Esophagus muscularis mucosa (tissue), 4 donors: ENCODE measurements at regions of chr13 and their contacts with region 1.

Region 1: DNA sequence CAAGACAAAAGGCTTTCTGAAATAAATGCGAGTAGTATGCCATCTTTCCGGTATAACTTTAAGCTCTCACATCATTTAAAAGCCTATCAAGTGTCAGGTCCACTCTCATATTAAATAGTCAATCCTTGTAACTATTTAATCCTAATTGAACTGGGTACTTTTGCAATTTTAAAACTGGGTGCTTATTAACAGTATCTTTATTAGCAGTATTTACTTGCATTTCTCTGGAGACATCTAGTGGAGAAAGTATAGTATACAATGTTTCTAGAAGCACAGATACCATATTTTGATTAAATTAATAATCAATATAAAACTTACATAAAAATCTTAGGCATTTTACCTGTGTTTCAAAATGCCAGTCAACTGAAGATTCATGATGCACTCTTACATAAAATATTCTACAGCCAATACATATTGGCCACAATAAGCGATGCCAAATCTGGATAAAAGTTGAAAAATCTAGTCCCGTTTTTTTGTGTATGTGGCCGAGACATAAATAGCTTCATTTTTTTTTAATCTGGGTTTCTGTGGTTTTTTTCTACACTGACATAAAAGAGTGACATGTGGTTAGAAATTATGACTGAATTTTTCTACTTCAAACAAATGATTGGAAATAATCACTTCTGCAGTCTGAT is 4.3 kb upstream of the POSTN start:
- DNase-seq: no peak
- H3K4me3 ChIP-seq: no peak overlapping the region
- H3K27ac ChIP-seq: no peak overlapping the region
- H3K4me1 ChIP-seq: peaks cover 0 to 9% (median 2%) of the 10 kb centered on the region in 4 donors
- H3K27me3 ChIP-seq: no peaks in the 10 kb centered on the region
- CTCF ChIP-seq: peak; percentile 23 to 48 (median 31)
- EP300 ChIP-seq: no peak
- POLR2A ChIP-seq: no peak

Region 2: DNA sequence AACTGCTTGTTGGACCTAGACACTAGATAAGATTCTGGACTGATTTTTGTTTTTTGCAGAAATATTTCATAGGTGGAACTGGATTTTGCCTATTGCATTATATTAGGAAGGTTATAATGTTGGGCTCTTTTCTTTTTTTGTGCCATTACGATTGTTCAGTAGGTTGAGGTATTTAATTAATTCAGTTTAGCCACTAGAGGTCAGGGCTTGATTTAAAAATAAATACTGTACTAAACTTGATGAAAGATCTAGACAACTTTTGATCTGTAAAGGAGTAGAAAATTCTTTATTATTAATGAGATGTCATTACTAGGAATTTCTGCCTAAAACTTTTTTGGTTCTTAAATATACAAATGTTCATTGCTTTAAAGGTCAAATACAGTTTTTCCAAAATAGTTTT is 528.2 kb before region 1 on chr13:
- intact Hi-C with region 1: loop called (anchors 10 kb)
- DNase-seq: no peak
- H3K4me3 ChIP-seq: no peak overlapping the region
- H3K27ac ChIP-seq: no peak overlapping the region
- H3K4me1 ChIP-seq: no peaks in the 10 kb centered on the region
- H3K27me3 ChIP-seq: peaks cover 0 to 2% (median 0%) of the 10 kb centered on the region in 4 donors
- CTCF ChIP-seq: peak; percentile 23 to 46 (median 41)
- EP300 ChIP-seq: no peak
- POLR2A ChIP-seq: no peak

Region 3: DNA sequence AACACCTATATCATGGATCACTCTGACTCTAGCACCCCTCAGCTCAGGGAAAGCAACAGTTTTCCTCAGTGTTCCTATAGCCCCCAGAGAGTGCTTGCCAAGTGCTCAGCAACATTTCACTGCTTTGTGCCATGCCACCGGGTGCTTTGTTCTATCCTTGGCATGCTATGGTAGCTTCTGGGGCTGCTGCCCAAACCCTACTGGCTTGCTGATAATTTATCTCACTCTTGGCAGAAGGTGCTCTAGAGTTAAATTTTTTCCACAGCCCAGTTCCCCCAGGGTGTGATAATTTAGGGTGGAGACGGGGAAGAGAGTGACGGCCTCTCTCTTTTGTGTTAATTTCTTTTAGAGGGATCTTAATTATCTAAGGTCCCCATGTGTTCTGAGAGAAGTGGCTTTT is 484.8 kb before region 1 on chr13:
- intact Hi-C with region 1: loop called (anchors 10 kb)
- DNase-seq: no peak
- H3K4me3 ChIP-seq: no peak overlapping the region
- H3K27ac ChIP-seq: no peak overlapping the region
- H3K4me1 ChIP-seq: peaks cover 0 to 5% (median 0%) of the 10 kb centered on the region in 4 donors
- H3K27me3 ChIP-seq: no peaks in the 10 kb centered on the region
- CTCF ChIP-seq: no peak
- EP300 ChIP-seq: no peak
- POLR2A ChIP-seq: no peak

Region 4: DNA sequence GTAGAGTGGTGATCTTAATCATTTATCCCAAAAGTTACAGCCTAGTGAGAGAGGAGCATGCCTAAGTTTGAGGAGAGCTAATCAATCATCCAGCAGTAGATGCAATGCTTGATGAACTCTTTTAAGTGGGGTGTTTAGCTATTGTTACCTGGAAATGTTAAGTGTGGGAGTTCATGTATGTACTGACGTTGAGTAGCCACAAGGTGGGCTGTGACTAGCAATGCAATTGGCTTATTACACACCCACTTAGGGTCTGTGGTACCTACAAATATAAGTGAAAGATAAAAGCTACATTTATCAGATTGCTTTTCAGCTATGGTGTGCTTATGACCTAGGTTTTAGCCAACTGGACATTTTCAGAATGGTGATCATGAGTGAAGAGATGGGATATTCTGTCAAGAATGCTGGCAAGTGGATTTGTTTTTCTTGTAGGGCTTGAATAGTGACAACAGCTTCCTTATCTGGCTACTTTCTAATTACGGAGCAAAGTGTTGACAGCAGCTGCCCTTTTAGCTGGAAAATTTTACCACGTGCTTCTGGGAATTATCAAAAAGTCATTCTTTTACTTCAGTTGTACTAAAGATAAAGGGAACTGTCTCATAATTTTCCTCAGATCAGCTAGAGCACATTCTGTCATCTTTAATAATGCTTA is 174.9 kb before region 1 on chr13:
- intact Hi-C with region 1: no loop called
- DNase-seq: no peak
- H3K4me3 ChIP-seq: no peak overlapping the region
- H3K27ac ChIP-seq: no peak overlapping the region
- H3K4me1 ChIP-seq: no peaks in the 10 kb centered on the region
- H3K27me3 ChIP-seq: no peaks in the 10 kb centered on the region
- CTCF ChIP-seq: no peak
- EP300 ChIP-seq: no peak
- POLR2A ChIP-seq: no peak

Region 5: DNA sequence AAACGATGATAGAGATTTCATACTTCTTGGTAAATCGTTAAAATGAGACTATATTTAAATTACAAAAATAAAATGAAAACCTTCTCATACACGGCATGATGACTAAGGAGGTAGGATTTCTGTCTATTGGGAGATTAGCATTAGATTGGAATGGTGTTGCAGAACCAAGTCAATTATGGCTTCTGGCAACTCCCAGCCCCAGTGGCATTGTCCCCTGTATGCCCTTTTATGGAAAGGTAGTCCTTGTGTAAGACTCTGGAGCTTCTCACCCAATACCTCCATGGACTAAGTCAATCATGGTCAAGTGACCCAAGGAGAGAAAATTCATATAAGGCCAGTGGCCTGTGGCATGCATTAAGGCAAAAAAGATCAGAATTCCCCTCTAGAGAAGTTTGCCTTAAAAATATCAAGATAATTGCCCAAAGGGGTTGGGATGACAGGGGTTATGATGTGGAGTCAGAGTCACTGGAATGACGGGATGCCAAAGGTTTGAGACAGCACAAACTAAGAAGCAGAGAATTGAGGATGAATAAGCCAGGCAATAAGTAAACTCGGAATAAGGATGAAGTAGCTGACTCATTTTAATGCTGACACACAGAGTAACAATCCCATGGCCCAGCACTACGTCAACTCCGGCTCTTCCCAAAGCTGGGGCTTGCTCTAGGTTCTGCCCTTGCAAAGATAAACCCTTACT is 53.5 kb after region 1 on chr13:
- intact Hi-C with region 1: no loop called
- DNase-seq: no peak
- H3K4me3 ChIP-seq: no peak overlapping the region
- H3K27ac ChIP-seq: no peak overlapping the region
- H3K4me1 ChIP-seq: no peaks in the 10 kb centered on the region
- H3K27me3 ChIP-seq: no peaks in the 10 kb centered on the region
- CTCF ChIP-seq: no peak
- EP300 ChIP-seq: no peak
- POLR2A ChIP-seq: no peak